CD4-positive, alpha-beta memory T cell (primary cell): ENCODE measurements at regions of chr5 and their contacts with region 1.

Region 1: GRCh38 chr5:39699161-39699560 is 274.4 kb upstream of the DAB2 start:
- DNase-seq: no peak
- H3K4me3 ChIP-seq: no peak overlapping the region
- H3K4me3 Mint-ChIP-seq: no peak overlapping the region
- H3K27ac ChIP-seq: no peak overlapping the region
- H3K27ac Mint-ChIP-seq: no peak overlapping the region
- H3K4me1 ChIP-seq: no peaks in the 10 kb centered on the region
- H3K4me1 Mint-ChIP-seq: no peaks in the 10 kb centered on the region
- H3K27me3 ChIP-seq: no peaks in the 10 kb centered on the region
- H3K27me3 Mint-ChIP-seq: peaks cover 3 to 9% of the 10 kb centered on the region in 2 donors

Region 2: GRCh38 chr5:39608024-39608423 is 91.1 kb before region 1 on chr5:
- CTCF ChIA-PET with region 1: no interaction called
- POLR2A ChIA-PET with region 1: no interaction called
- intact Hi-C with region 1: no loop called
- DNase-seq: no peak
- H3K4me3 ChIP-seq: no peak overlapping the region
- H3K4me3 Mint-ChIP-seq: no peak overlapping the region
- H3K27ac ChIP-seq: no peak overlapping the region
- H3K27ac Mint-ChIP-seq: no peak overlapping the region
- H3K4me1 ChIP-seq: no peaks in the 10 kb centered on the region
- H3K4me1 Mint-ChIP-seq: no peaks in the 10 kb centered on the region
- H3K27me3 ChIP-seq: no peaks in the 10 kb centered on the region
- H3K27me3 Mint-ChIP-seq: peaks cover under 1 to 9% of the 10 kb centered on the region in 2 donors

Region 3: DNA sequence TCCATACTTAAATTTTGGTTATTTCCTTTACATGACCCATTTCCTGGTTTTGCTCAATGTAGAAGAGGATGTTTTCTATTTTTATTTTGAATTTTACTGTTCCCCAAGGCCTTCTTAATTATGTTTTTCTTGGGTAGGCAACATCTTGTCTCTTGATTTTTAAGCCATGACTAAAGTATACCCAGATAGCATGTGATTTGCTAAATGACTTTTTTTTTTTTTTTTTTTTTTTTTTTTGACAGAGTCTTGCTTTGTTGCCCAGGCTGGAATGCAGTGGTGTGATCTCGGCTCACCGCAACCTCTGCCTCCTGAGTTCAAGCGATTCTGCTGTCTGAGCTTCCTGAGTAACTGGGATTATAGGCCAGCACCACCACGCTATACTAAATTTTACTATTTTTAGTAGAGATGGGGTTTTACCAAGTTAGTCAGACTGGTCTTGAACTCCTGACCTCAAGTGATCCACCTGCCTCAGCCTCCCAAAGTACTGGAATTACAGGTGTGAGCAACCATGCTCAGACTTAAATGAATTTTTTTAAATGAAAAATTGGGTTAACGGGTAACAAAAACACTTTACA is 75.8 kb before region 1 on chr5:
- CTCF ChIA-PET with region 1: no interaction called
- POLR2A ChIA-PET with region 1: no interaction called
- intact Hi-C with region 1: no loop called
- DNase-seq: no peak
- H3K4me3 ChIP-seq: no peak overlapping the region
- H3K4me3 Mint-ChIP-seq: no peak overlapping the region
- H3K27ac ChIP-seq: no peak overlapping the region
- H3K27ac Mint-ChIP-seq: no peak overlapping the region
- H3K4me1 ChIP-seq: no peaks in the 10 kb centered on the region
- H3K4me1 Mint-ChIP-seq: no peaks in the 10 kb centered on the region
- H3K27me3 ChIP-seq: no peaks in the 10 kb centered on the region
- H3K27me3 Mint-ChIP-seq: peaks cover 16 to 24% of the 10 kb centered on the region in 2 donors

Region 4: DNA sequence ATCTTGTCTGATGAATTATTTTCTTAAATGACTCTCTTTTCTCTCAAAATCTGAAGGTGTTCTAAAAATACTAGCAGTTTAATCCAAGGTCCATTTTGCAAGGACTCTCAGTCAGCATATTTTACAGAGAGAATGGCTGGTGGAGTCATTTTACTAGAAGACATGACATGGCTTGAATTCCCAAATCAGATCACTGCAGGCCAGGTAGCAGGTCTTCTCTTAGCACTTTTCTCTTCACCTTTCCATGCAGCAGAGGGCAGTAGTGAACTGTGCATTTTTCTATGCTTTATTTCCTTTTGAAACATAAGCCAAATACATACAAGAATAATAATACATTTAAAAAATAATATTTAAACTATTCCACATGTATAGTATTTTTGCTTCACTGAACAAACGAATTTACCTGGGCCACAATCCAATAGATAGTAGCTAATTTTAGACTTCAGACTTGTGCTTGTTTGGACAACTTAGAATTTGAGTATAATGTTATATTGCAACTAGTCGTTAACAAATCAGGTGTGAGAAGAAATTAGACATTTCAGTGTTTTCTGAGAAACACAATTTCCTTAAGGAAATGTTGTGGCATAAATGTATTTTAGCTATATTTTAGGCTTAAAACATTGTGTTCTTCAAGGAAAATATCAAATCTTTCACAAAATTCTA is 15.0 kb after region 1 on chr5:
- CTCF ChIA-PET with region 1: interaction called, 12 read pairs
- POLR2A ChIA-PET with region 1: no interaction called
- intact Hi-C with region 1: no loop called
- DNase-seq: peak in 4 of 5 donors; percentile 38 to 47 (median 43)
- H3K4me3 ChIP-seq: no peak overlapping the region
- H3K4me3 Mint-ChIP-seq: no peak overlapping the region
- H3K27ac ChIP-seq: no peak overlapping the region
- H3K27ac Mint-ChIP-seq: no peak overlapping the region
- H3K4me1 ChIP-seq: no peaks in the 10 kb centered on the region
- H3K4me1 Mint-ChIP-seq: no peaks in the 10 kb centered on the region
- H3K27me3 ChIP-seq: no peaks in the 10 kb centered on the region
- H3K27me3 Mint-ChIP-seq: peaks cover 0 to 2% of the 10 kb centered on the region in 2 donors